IMR-90 (cell line): ENCODE measurements at regions of chr5 and their contacts with region 1.

Region 1: GRCh38 chr5:83608122-83608521 is 112.5 kb downstream of the HAPLN1 start:
- DNase-seq: peak; percentile 40
- ATAC-seq: peak; percentile 95
- H3K4me3 ChIP-seq: no peak overlapping the region
- H3K27ac ChIP-seq: no peak overlapping the region
- H3K4me1 ChIP-seq: no peaks in the 10 kb centered on the region
- H3K27me3 ChIP-seq: peaks cover 10% of the 10 kb centered on the region
- CTCF ChIP-seq: peak; percentile 54
- POLR2A ChIP-seq: no peak
- RAD21 ChIP-seq: peak; percentile 41

Region 2: GRCh38 chr5:83095163-83095956 is 512.8 kb before region 1 on chr5:
- CTCF ChIA-PET with region 1: no interaction called
- POLR2A ChIA-PET with region 1: no interaction called
- dilution Hi-C with region 1: no loop called
- in situ Hi-C with region 1: no loop called
- intact Hi-C with region 1: no loop called
- DNase-seq: no peak
- ATAC-seq: no peak; the same call in 1 of the 2 replicates
- H3K4me3 ChIP-seq: no peak overlapping the region
- H3K27ac ChIP-seq: no peak overlapping the region
- H3K4me1 ChIP-seq: peaks cover 9% of the 10 kb centered on the region
- H3K27me3 ChIP-seq: no peaks in the 10 kb centered on the region
- CTCF ChIP-seq: no peak
- POLR2A ChIP-seq: no peak
- RAD21 ChIP-seq: no peak

Region 3: DNA sequence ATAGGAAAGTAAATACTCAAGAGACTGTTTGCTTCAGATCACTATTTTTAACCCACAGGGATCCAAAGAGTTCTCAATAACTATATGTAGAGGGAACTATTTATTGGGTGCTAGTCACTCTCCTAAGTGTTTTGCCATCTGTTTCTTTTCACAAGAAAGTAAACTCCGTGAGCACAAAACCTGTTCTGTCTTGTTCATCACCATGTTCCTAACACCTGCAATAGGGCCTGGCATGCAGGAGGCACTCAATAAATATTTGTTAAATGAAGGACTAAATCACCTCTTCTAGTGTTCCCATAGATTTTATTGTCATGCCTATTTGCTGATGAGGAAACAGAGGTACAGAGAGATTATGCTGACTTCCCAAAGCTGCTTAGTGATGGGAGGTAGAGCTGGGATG is 18.3 kb before region 1 on chr5:
- CTCF ChIA-PET with region 1: interaction called, 8 read pairs
- POLR2A ChIA-PET with region 1: interaction called, 10 read pairs
- dilution Hi-C with region 1: no loop called
- in situ Hi-C with region 1: no loop called
- intact Hi-C with region 1: no loop called
- DNase-seq: no peak
- ATAC-seq: no peak
- H3K4me3 ChIP-seq: no peak overlapping the region
- H3K27ac ChIP-seq: no peak overlapping the region
- H3K4me1 ChIP-seq: peaks cover 8% of the 10 kb centered on the region
- H3K27me3 ChIP-seq: no peaks in the 10 kb centered on the region
- CTCF ChIP-seq: no peak
- POLR2A ChIP-seq: no peak
- RAD21 ChIP-seq: no peak

Region 4: GRCh38 chr5:83712001-83712601 is 104.0 kb after region 1 on chr5:
- CTCF ChIA-PET with region 1: interaction called, 5 read pairs
- POLR2A ChIA-PET with region 1: no interaction called
- dilution Hi-C with region 1: no loop called
- in situ Hi-C with region 1: no loop called
- intact Hi-C with region 1: loop called (anchors 5 kb)
- DNase-seq: peak; percentile 35
- ATAC-seq: peak; percentile 74
- H3K4me3 ChIP-seq: no peak overlapping the region
- H3K27ac ChIP-seq: no peak overlapping the region
- H3K4me1 ChIP-seq: peaks cover 3% of the 10 kb centered on the region
- H3K27me3 ChIP-seq: peaks cover 8% of the 10 kb centered on the region
- CTCF ChIP-seq: peak; percentile 63
- POLR2A ChIP-seq: no peak
- RAD21 ChIP-seq: peak; percentile 63